Gastrocnemius medialis (tissue), 4 donors: ENCODE measurements at regions of chr7 and their contacts with region 1.

Region 1: DNA sequence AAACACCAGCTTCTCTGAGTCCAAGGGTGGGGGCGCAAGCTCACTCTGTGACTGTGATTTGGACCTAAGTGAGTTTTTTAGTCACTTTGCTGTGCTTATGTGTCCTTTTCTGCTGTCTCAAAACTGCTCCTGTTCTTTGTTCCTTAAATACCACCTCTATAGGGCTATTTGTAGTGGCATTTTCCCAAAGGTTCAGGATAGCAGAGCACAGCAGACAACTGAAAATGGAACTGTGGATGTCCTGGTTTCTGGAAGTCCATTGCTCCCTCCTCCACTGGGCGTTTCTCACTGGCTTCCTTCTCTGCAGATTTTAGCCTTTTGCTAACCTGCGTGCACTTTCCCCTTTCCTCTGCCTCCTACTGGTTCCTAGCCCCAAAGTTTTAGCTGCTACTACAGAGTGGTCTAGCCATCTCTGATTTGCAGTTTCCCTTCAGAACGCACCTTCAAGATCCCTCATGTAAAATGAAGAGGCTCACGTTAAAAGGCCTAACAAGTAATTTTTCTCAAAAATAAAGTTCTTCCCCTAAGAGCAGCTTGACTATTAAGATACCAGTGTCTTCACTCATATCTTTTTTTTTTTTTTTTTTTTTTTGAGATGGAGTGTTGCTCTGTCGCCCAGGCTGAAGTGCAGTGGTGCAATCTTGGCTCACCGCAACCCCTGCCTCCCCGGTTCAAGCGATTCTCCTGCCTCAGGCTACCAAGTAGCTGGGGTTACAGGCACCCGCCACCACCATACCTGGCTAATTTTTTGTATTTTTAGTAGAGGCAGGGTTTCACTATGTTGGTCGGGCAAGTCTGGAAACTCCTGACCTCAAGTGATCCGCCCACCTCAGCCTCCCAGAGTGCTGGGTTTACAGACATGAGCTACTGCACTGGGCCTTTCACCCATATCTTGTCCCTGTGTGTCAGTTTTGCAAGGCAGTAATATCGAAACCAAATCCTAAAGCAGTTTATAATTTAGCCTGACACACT is 25.8 kb downstream of the BLVRA start:
- DNase-seq: no peak
- ATAC-seq: no peak
- H3K4me3 ChIP-seq: no peak overlapping the region
- H3K27ac ChIP-seq: no peak overlapping the region
- H3K4me1 ChIP-seq: peaks cover 24 to 32% of the 10 kb centered on the region in 2 donors
- H3K27me3 ChIP-seq: no peaks in the 10 kb centered on the region
- CTCF ChIP-seq: no peak
- POLR2A ChIP-seq: no peak

Region 2: GRCh38 chr7:43729214-43729923 is 54.9 kb before region 1 on chr7 and contains the start of gene COA1:
- in situ Hi-C with region 1: no loop called
- intact Hi-C with region 1: loop called (anchors 5 kb)
- DNase-seq: peak; percentile 79 to 90
- ATAC-seq: peak; percentile 96 to 97
- H3K4me3 ChIP-seq: peak within 1 kb of the TSS; percentile 62 to 84 (median 73)
- H3K27ac ChIP-seq: peak within 1 kb of the TSS; percentile 80 to 94 (median 93)
- H3K4me1 ChIP-seq: peaks cover 35 to 36% of the 10 kb centered on the region in 2 donors
- H3K27me3 ChIP-seq: no peaks in the 10 kb centered on the region
- CTCF ChIP-seq: no peak
- POLR2A ChIP-seq: peak; percentile 54 to 65
- total RNA-seq, gene COA1: 34.9 to 55.2 (median 49.3) TPM